B cell (primary cell): ENCODE measurements at regions of chr12 and their contacts with region 1.

Region 1: DNA sequence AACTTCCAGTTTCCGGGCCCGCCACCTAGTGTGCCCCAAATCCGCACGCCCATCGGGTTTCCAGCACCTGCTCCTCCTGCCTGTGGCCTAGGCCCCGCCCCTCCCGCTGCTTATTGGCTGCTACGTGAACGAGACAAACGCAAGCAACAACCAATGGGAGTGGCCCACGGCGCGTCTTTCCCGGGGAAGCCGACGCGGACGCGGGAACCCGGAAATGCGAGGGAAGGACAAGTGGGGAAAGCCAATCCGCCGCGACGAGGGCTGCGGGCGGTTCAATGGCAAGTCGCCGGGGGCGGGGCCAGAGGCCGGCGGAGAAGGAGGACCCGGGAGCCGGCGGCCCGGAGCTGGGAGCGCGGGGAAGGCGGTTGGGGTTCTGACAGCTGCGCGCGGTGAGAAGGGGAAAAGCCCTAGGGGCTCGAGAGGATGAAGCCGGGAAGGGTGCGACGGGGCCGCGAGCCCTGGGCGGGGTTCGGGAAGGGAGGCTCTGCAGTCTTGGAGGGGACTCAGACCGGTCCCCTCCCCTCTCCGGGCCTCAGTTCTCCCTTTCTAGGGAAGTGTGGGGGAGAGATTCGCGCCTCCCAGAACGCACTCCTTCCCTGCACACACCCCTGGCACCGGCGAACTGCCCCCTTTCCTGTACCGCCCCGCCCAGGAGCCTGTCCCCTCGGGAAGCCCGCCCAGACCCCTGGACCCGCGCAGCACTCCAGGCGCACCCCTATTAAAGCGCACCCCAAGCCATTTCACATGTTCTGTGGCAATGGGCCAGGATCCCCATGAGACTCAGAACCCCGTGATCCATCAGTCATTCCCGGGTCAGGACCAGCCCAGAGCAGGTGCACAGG is at the start of gene FICD:
- DNase-seq: peak; percentile 98
- ATAC-seq: peak; percentile 95
- H3K4me3 ChIP-seq: peak within 1 kb of the TSS; percentile 40 to 97 (median 93)
- H3K4me3 Mint-ChIP-seq: peak within 1 kb of the TSS; percentile 96
- H3K27ac ChIP-seq: peak within 1 kb of the TSS; percentile 58 to 81
- H3K27ac Mint-ChIP-seq: peak within 1 kb of the TSS; percentile 87
- H3K4me1 ChIP-seq: peaks cover 13 to 30% of the 10 kb centered on the region in 2 donors
- H3K4me1 Mint-ChIP-seq: peaks cover 37% of the 10 kb centered on the region
- H3K27me3 ChIP-seq: no peaks in the 10 kb centered on the region
- H3K27me3 Mint-ChIP-seq: no peaks in the 10 kb centered on the region
- CTCF ChIP-seq: no peak
- total RNA-seq, gene FICD: 9.1 and 9.7 TPM in 2 replicates

Region 2: DNA sequence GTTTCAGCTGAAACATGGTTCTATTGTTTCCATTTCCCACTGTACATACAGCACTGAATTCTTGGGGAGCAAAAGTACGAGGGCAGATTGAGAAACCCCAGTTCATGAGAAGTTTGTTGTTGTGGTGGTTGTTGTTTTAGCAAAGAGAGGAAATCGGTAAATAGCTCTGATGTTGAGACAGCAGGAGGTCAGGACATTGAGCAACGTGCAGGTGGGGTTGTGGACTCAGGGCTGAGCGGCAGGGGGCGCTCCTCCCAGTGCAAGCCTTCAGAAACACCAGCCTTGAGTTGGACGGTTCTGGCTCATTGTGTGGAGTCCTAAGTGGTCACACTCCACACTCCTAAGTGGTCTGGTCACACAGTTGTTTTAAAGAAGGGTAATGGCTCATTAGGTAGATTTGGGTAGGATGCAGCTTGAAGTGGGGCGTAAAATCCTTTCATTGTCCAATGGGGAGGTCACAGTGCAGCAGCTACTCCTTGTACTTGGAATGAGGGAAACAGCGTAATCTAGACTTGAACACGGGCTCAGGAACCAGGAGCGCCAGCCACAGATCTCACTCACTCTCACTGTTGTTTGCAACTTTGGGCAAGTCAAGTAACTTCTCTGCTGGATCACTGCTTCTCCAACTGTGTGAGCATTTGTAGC is 844.1 kb before region 1 on chr12:
- CTCF ChIA-PET with region 1: interaction called, 4 read pairs
- POLR2A ChIA-PET with region 1: no interaction called
- intact Hi-C with region 1: loop called (anchors 1 kb)
- DNase-seq: peak; percentile 36
- ATAC-seq: peak; percentile 31
- H3K4me3 ChIP-seq: no peak overlapping the region
- H3K4me3 Mint-ChIP-seq: no peak overlapping the region
- H3K27ac ChIP-seq: no peak overlapping the region
- H3K27ac Mint-ChIP-seq: no peak overlapping the region
- H3K4me1 ChIP-seq: no peaks in the 10 kb centered on the region
- H3K4me1 Mint-ChIP-seq: peaks cover 3% of the 10 kb centered on the region
- H3K27me3 ChIP-seq: peaks cover 0 to 14% (median 0%) of the 10 kb centered on the region in 4 experiments
- H3K27me3 Mint-ChIP-seq: peaks cover 32% of the 10 kb centered on the region
- CTCF ChIP-seq: peak; percentile 45

Region 3: GRCh38 chr12:107917912-107918800 is 597.0 kb before region 1 on chr12:
- CTCF ChIA-PET with region 1: interaction called, 12 read pairs
- POLR2A ChIA-PET with region 1: no interaction called
- intact Hi-C with region 1: loop called (anchors 1 kb)
- DNase-seq: peak; percentile 20
- ATAC-seq: peak; percentile 36
- H3K4me3 ChIP-seq: no peak overlapping the region
- H3K4me3 Mint-ChIP-seq: no peak overlapping the region
- H3K27ac ChIP-seq: no peak overlapping the region
- H3K27ac Mint-ChIP-seq: no peak overlapping the region
- H3K4me1 ChIP-seq: no peaks in the 10 kb centered on the region
- H3K4me1 Mint-ChIP-seq: peaks cover 2% of the 10 kb centered on the region
- H3K27me3 ChIP-seq: peaks cover 0 to 31% (median 9%) of the 10 kb centered on the region in 4 experiments
- H3K27me3 Mint-ChIP-seq: peaks cover 63% of the 10 kb centered on the region
- CTCF ChIP-seq: peak; percentile 51

Region 4: DNA sequence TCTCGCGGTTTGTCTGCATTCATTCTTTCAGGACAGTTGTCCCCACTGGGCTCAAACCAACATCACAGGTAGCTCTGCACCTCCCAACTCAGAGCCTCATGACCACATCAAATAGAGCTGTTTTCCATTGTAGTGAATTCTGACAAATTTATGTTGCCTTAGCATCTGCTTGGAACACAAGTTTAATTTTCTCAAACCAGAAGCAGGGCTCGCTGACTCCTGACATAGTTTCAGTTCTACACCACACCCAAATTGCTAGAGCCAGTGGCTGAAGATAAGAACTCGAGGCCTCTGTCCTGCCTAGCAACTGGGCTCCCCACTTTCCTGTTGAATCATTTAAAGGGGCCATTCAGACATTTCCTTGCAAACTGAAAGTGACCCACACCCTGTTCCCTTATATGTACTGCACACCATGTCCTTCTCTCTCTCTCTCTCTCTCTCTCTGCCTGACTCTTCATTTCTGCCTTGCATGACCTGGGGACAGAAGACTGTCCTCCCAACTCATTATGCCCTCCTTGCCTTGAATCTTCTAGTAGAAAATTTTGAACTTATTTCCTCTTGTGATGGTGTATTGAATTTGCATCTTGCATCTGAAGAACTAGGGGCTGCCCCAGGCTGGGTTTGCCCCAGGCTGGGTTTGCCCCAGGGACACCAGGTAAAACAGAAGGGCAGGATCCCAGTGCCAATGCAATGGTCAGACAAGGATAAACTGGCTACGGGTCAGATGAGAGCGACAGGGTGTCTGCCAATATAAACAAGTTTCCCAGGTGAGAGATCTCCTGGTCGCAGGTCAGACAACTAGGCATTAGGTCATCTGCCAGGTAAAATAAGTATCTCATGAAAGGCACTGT is 395.8 kb before region 1 on chr12:
- CTCF ChIA-PET with region 1: no interaction called
- POLR2A ChIA-PET with region 1: interaction called, 3 read pairs
- intact Hi-C with region 1: loop called (anchors 1 kb)
- DNase-seq: peak; percentile 69
- ATAC-seq: peak; percentile 70
- H3K4me3 ChIP-seq: peak overlapping the region in 1 of 5 experiments; percentile 12
- H3K4me3 Mint-ChIP-seq: peak overlapping the region; percentile 66
- H3K27ac ChIP-seq: peak overlapping the region; percentile 68 to 74
- H3K27ac Mint-ChIP-seq: peak overlapping the region; percentile 89
- H3K4me1 ChIP-seq: peaks cover 22 to 62% of the 10 kb centered on the region in 2 donors
- H3K4me1 Mint-ChIP-seq: peaks cover 55% of the 10 kb centered on the region
- H3K27me3 ChIP-seq: peaks cover 0 to 4% (median 0%) of the 10 kb centered on the region in 4 experiments
- H3K27me3 Mint-ChIP-seq: peaks cover 6% of the 10 kb centered on the region
- CTCF ChIP-seq: no peak

Region 5: DNA sequence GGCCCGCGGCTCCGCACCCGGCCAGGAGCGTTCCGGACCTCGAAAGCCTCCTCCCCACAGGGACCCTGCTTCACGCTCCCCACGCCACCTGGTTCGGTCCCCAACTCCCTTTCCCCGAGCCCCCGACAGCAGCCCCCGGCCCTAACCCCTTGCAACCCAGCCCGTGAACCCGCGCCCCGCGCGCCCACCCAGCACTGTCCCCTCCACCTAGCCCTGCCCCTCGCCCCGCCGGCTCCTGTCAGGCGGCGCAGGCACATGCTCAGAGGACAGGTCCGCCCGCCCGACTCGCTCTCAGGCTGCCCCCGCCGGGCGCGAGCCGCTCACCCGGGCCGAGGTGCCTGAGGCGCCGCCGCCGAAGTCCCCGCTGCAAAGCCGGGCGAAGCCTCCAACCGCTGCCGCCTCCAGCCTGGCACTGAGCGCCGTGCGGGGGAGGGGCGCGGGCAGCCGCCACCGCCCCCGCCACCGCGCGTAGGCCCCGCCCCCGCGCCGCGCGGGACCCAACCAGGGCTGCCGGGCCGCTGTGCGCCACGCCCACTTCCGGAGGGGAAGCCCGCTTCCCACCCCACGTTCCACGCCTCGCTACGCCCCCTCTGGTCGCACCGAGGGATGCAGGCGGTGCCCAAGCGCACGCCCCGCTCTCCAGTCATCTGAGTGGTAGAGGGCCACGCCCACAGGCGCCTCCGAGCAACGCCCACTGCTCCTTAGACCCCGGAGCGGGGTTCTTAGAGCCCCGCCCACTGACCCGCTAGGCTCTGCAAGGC is 216.1 kb after region 1 on chr12 and contains the start of gene CORO1C:
- CTCF ChIA-PET with region 1: no interaction called
- POLR2A ChIA-PET with region 1: no interaction called
- intact Hi-C with region 1: loop called (anchors 1 kb)
- DNase-seq: peak; percentile 97
- ATAC-seq: peak; percentile 73
- H3K4me3 ChIP-seq: peak within 1 kb of the TSS; percentile 70 to 92 (median 86)
- H3K4me3 Mint-ChIP-seq: peak within 1 kb of the TSS; percentile 99
- H3K27ac ChIP-seq: peak within 1 kb of the TSS; percentile 80 to 92
- H3K27ac Mint-ChIP-seq: peak within 1 kb of the TSS; percentile 98
- H3K4me1 ChIP-seq: peaks cover 11 to 16% of the 10 kb centered on the region in 2 donors
- H3K4me1 Mint-ChIP-seq: peaks cover 51% of the 10 kb centered on the region
- H3K27me3 ChIP-seq: no peaks in the 10 kb centered on the region
- H3K27me3 Mint-ChIP-seq: no peaks in the 10 kb centered on the region
- CTCF ChIP-seq: peak; percentile 83
- total RNA-seq, gene CORO1C: 58.9 and 68.0 TPM in 2 replicates

Region 6: DNA sequence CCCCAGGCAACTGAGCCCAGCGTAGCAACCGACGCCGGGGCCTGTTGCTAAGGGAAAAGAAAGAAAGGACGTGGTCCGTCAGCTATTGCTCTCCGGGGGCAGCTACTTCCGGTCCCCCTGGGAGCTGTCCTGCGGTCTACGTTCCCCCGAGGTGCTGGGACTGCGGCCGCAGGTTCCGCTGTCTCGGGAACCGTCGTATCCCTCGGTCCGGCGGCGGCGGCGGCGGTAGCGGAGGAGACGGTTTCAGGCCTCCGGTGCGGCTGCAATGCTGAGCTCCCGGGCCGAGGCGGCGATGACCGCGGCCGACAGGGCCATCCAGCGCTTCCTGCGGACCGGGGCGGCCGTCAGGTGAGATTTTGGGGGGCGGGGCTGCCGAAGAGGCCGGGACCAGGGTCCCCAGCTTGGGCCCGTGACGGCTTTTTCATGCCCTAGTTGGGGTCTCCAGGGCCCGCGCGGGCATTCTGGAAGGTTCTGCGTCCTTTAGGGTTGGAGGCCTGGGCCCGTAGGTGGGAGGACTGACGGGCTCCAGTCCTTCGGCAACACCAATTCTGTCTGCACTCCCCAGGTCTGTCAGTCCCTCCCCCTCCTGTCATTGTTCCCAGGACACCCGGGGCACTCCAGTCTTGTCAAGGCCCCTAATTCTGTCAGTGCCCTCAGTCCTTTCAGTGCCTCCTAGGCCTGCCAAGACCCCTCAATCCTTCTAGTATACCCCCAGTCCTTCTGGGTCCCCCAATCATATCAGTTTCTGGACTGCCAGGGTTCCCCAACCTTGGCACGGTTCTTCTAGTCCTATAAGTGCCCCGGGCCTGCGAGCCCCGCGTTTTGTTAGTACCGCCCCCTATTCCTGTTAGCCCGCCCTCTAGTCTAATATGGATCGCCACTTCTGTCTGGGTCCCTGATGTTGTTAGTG is 537.5 kb after region 1 on chr12 and contains the start of gene USP30:
- CTCF ChIA-PET with region 1: no interaction called
- POLR2A ChIA-PET with region 1: no interaction called
- intact Hi-C with region 1: loop called (anchors 1 kb)
- DNase-seq: peak; percentile 92
- ATAC-seq: peak; percentile 86
- H3K4me3 ChIP-seq: peak within 1 kb of the TSS; percentile 75 to 94 (median 89)
- H3K4me3 Mint-ChIP-seq: peak within 1 kb of the TSS; percentile 90
- H3K27ac ChIP-seq: peak within 1 kb of the TSS; percentile 78 to 82
- H3K27ac Mint-ChIP-seq: peak within 1 kb of the TSS; percentile 92
- H3K4me1 ChIP-seq: peaks cover 8 to 24% of the 10 kb centered on the region in 2 donors
- H3K4me1 Mint-ChIP-seq: peaks cover 22% of the 10 kb centered on the region
- H3K27me3 ChIP-seq: no peaks in the 10 kb centered on the region
- H3K27me3 Mint-ChIP-seq: no peaks in the 10 kb centered on the region
- CTCF ChIP-seq: no peak
- total RNA-seq, gene USP30: 24.7 and 32.5 TPM in 2 replicates